ENCODE measurements at regions of chr15 and their contacts with region 1.

Region 1: DNA sequence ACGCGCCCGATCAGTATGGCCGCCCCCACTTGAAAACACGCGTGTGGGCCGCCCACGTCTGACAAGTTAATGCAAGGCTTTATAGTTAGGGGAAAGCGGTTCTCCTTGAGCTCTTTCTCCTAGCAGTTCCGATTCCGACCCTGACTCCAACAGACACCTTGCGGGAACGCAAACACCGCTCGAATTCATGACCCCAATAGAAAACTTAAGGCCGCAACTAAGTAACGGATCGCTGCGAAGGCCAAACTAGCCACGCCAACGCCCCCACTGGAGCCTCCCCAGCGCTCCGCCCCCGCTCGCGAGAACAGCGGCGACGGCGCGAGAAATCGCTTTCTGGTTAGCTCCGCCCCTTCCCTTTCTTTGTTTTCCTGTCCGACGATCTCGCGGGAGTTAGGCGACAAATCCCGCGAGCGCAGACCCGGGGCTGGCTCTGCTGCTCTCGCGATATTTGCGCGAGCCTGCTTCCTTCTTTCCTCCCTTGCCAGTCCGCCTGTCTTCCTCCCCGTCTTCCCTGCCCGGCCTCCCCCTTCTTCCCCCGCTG is at the start of gene IREB2:
- DNase-seq: peak; percentile 95 to 99 (median 97)
- ATAC-seq: peak; percentile 91
- H3K4me3 ChIP-seq: peak within 1 kb of the TSS; percentile 83 to 98
- H3K4me3 Mint-ChIP-seq: peak within 1 kb of the TSS; percentile 98
- H3K27ac ChIP-seq: peak within 1 kb of the TSS; percentile 95 to 96
- H3K27ac Mint-ChIP-seq: peak within 1 kb of the TSS; percentile 98
- H3K4me1 ChIP-seq: peaks cover 41% of the 10 kb centered on the region
- H3K4me1 Mint-ChIP-seq: peaks cover 47% of the 10 kb centered on the region
- H3K27me3 ChIP-seq: no peaks in the 10 kb centered on the region
- H3K27me3 Mint-ChIP-seq: no peaks in the 10 kb centered on the region
- CTCF ChIP-seq: no peak
- total RNA-seq, gene IREB2: 67.4 to 76.7 TPM

Region 2: DNA sequence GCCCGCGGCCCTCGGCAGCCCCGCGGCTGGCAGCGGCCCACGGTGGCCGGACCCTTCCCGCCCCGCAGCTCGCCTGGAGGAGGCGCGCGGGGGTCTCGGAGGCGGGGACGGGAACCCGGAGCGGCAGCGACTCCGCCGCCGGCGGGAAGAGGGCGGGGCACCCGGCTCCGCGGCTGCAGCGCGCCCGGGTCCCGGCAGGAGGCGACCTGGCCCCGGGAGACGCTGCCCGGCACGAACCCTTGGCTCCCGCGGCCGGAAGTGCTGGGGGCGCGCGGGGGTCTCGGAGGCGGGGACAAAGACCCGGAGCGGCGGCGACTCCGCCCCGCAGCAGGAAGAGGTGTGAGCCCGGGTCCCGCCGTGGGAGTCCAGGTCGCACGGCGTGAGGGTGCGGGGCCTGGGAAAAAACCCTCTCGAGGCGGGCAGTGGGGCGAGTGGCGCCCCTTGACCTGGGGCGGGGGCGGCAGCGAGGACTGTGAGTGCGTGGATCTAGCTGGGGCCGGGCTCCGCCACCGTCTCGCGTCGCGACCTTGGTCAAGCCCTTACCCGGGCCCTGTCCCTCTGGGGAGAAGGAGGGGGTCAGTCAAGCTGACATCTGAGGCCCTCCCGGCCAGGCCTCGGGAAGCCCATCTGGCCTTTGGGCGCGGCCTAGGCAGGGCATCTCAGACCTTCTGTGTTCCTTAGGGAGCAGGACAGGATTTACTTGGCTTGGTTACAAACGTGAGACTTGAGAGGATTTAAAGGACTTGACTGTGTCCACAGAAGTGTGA is 306.4 kb before region 1 on chr15 and contains the start of gene CIB2:
- CTCF ChIA-PET with region 1: no interaction called
- POLR2A ChIA-PET with region 1: no interaction called
- intact Hi-C with region 1: loop called in 1 of 2 experiments (anchors 5 kb)
- DNase-seq: peak; percentile 47 to 89 (median 74)
- ATAC-seq: peak; percentile 87
- H3K4me3 ChIP-seq: peak within 1 kb of the TSS; percentile 82 to 91
- H3K4me3 Mint-ChIP-seq: peak within 1 kb of the TSS; percentile 82
- H3K27ac ChIP-seq: peak within 1 kb of the TSS; percentile 65 to 89
- H3K27ac Mint-ChIP-seq: peak within 1 kb of the TSS; percentile 87
- H3K4me1 ChIP-seq: peaks cover 15% of the 10 kb centered on the region
- H3K4me1 Mint-ChIP-seq: peaks cover 26% of the 10 kb centered on the region
- H3K27me3 ChIP-seq: no peaks in the 10 kb centered on the region
- H3K27me3 Mint-ChIP-seq: no peaks in the 10 kb centered on the region
- CTCF ChIP-seq: peak; percentile 75
- total RNA-seq, gene CIB2: 1.2 to 1.9 TPM

Region 3: GRCh38 chr15:78264304-78265136 is 173.3 kb before region 1 on chr15 and contains the start of gene DNAJA4:
- CTCF ChIA-PET with region 1: no interaction called
- POLR2A ChIA-PET with region 1: interaction called, 15 read pairs
- intact Hi-C with region 1: loop called (anchors 1 to 10 kb)
- DNase-seq: peak; percentile 29 to 81 (median 63)
- ATAC-seq: peak; percentile 78
- H3K4me3 ChIP-seq: peak within 1 kb of the TSS; percentile 54 to 71
- H3K4me3 Mint-ChIP-seq: peak within 1 kb of the TSS; percentile 91
- H3K27ac ChIP-seq: peak within 1 kb of the TSS; percentile 67 to 77
- H3K27ac Mint-ChIP-seq: peak within 1 kb of the TSS; percentile 96
- H3K4me1 ChIP-seq: peaks cover 15% of the 10 kb centered on the region
- H3K4me1 Mint-ChIP-seq: peaks cover 37% of the 10 kb centered on the region
- H3K27me3 ChIP-seq: no peaks in the 10 kb centered on the region
- H3K27me3 Mint-ChIP-seq: no peaks in the 10 kb centered on the region
- CTCF ChIP-seq: no peak
- total RNA-seq, gene DNAJA4: 48.9 to 52.1 TPM

Region 4: DNA sequence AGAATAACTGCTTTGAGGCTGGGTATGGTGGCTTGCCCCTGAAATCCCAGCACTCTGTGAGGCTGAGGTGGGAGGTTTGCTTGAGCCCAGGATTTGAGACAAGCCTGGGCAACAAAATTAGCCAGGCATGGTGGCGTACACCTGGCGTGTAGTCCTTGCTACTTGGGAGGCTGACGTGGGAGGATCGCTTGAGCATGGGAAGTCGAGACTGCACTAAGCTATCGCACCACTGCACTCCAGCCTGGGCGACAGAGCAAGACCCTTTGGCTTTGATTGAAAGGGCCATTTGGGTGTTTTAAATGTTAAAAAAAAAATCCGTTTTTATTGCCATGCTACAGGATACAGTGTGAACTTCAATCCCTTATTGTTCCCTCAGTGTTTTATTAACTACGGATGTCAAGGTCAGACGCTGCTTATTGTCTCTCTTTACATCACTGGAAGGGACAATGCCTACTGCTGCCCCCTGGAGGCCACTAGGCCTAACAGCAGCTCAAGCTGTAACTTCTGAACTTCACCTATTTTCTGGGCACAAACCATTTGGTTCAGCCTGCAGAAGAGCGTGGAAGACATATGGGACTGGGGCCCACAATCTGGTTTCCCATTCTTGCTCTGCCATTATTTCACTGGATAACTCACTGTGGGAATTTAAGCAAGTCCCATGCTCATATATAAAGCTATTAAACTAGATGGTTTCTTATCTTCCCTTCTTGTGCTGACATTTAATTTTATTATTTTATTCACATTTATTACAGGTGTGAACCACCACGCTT is 15.1 kb before region 1 on chr15:
- CTCF ChIA-PET with region 1: interaction called, 19 read pairs
- POLR2A ChIA-PET with region 1: interaction called, 12 read pairs
- intact Hi-C with region 1: no loop called
- DNase-seq: peak; percentile 31 to 75 (median 57)
- ATAC-seq: peak; percentile 92
- H3K4me3 ChIP-seq: no peak overlapping the region
- H3K4me3 Mint-ChIP-seq: no peak overlapping the region
- H3K27ac ChIP-seq: no peak overlapping the region
- H3K27ac Mint-ChIP-seq: no peak overlapping the region
- H3K4me1 ChIP-seq: no peaks in the 10 kb centered on the region
- H3K4me1 Mint-ChIP-seq: peaks cover 7% of the 10 kb centered on the region
- H3K27me3 ChIP-seq: no peaks in the 10 kb centered on the region
- H3K27me3 Mint-ChIP-seq: peaks cover 14% of the 10 kb centered on the region
- CTCF ChIP-seq: peak; percentile 92

Region 5: GRCh38 chr15:78461171-78461888 is 23.5 kb after region 1 on chr15:
- CTCF ChIA-PET with region 1: no interaction called
- POLR2A ChIA-PET with region 1: interaction called, 9 read pairs
- intact Hi-C with region 1: loop called in 1 of 2 experiments (anchors 2 kb)
- DNase-seq: peak in 7 of 9 experiments; percentile 15 to 58 (median 33)
- ATAC-seq: peak; percentile 82
- H3K4me3 ChIP-seq: no peak overlapping the region
- H3K4me3 Mint-ChIP-seq: no peak overlapping the region
- H3K27ac ChIP-seq: peak overlapping the region in 1 of 2 experiments; percentile 38
- H3K27ac Mint-ChIP-seq: peak overlapping the region; percentile 58
- H3K4me1 ChIP-seq: peaks cover 20% of the 10 kb centered on the region
- H3K4me1 Mint-ChIP-seq: peaks cover 53% of the 10 kb centered on the region
- H3K27me3 ChIP-seq: no peaks in the 10 kb centered on the region
- H3K27me3 Mint-ChIP-seq: no peaks in the 10 kb centered on the region
- CTCF ChIP-seq: no peak

Region 6: GRCh38 chr15:78540141-78540928 is 102.5 kb after region 1 on chr15 and contains the start of gene PSMA4:
- CTCF ChIA-PET with region 1: no interaction called
- POLR2A ChIA-PET with region 1: interaction called, 20 read pairs
- intact Hi-C with region 1: loop called (anchors 1 kb)
- DNase-seq: peak; percentile 86 to 98 (median 95)
- ATAC-seq: peak; percentile 83
- H3K4me3 ChIP-seq: peak within 1 kb of the TSS; percentile 85 to 96
- H3K4me3 Mint-ChIP-seq: peak within 1 kb of the TSS; percentile 88
- H3K27ac ChIP-seq: peak within 1 kb of the TSS; percentile 89 to 97
- H3K27ac Mint-ChIP-seq: peak within 1 kb of the TSS; percentile 95
- H3K4me1 ChIP-seq: peaks cover 28% of the 10 kb centered on the region
- H3K4me1 Mint-ChIP-seq: peaks cover 31% of the 10 kb centered on the region
- H3K27me3 ChIP-seq: no peaks in the 10 kb centered on the region
- H3K27me3 Mint-ChIP-seq: no peaks in the 10 kb centered on the region
- CTCF ChIP-seq: no peak
- total RNA-seq, gene PSMA4: 72.8 to 79.4 TPM

Region 7: GRCh38 chr15:78761891-78762385 is 324.1 kb after region 1 on chr15:
- CTCF ChIA-PET with region 1: no interaction called
- POLR2A ChIA-PET with region 1: no interaction called
- intact Hi-C with region 1: loop called in 1 of 2 experiments (anchors 5 kb)
- DNase-seq: no peak
- ATAC-seq: no peak
- H3K4me3 ChIP-seq: peak overlapping the region in 1 of 2 experiments; percentile 45
- H3K4me3 Mint-ChIP-seq: peak overlapping the region; percentile 55
- H3K27ac ChIP-seq: peak overlapping the region; percentile 39 to 71
- H3K27ac Mint-ChIP-seq: peak overlapping the region; percentile 85
- H3K4me1 ChIP-seq: peaks cover 20% of the 10 kb centered on the region
- H3K4me1 Mint-ChIP-seq: peaks cover 26% of the 10 kb centered on the region
- H3K27me3 ChIP-seq: no peaks in the 10 kb centered on the region
- H3K27me3 Mint-ChIP-seq: no peaks in the 10 kb centered on the region
- CTCF ChIP-seq: no peak

Measured in CD8-positive, alpha-beta T cell (primary cell).